Thyroid gland (tissue), 4 donors: ENCODE measurements at regions of chr1 and their contacts with region 1.

Region 1: GRCh38 chr1:6052543-6053205 is 7.0 kb downstream of the KCNAB2 start:
- DNase-seq: peak; percentile 67 to 79
- H3K4me3 ChIP-seq: no peak overlapping the region
- H3K27ac ChIP-seq: no peak overlapping the region
- H3K4me1 ChIP-seq: peaks cover 0 to 3% of the 10 kb centered on the region in 2 donors
- H3K27me3 ChIP-seq: no peaks in the 10 kb centered on the region
- CTCF ChIP-seq: peak in 3 of 6 experiments; percentile 23 to 50 (median 44)
- POLR2A ChIP-seq: no peak

Region 2: DNA sequence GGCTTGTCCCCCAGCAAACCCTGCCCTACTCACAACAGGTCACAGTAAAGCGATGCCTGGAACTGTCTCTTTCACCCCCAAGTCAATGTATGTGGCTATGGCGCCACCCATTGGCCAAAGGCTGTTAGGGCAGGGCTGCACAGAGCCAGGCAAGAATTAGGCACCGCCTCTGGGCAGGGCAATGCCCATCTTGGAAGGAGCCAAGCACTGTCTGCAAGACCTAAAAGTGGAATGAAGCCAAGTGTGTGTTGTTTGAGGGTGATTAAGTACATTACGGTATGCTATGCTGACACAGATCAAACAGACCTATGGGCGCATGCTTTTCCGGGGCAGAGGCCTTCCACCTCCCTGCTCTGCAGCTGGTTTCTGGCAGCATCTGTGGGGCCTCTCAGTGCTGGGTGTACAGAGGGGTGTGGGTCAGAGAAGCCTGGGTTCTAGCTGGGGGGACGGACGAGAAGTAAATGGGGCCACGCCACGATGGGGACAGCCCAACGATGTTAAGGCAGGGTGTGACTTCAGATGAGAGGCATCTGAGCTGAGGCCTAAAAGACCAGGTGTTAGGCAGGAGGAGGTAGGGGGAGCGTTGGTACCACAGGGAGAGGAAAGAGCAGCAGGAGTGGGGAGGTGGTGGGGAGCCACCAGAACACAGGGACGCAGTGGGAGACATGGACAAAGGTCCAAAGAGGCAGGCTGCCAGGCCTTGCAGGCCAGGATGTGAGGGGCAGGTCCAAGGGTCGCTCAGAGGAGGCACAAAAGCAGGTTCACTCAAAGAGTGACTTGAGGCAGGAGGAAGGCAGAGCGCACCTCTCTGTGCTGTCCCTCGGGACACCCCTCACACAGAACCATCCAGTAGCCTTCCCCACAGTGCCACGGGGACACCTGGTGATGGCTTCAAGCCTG is 291.1 kb after region 1 on chr1:
- intact Hi-C with region 1: loop called (anchors 10 kb)
- DNase-seq: peak; percentile 57 to 63
- H3K4me3 ChIP-seq: no peak overlapping the region
- H3K27ac ChIP-seq: no peak overlapping the region
- H3K4me1 ChIP-seq: no peaks in the 10 kb centered on the region
- H3K27me3 ChIP-seq: no peaks in the 10 kb centered on the region
- CTCF ChIP-seq: peak; percentile 55 to 83 (median 80)
- POLR2A ChIP-seq: no peak